IMR-90 (cell line): ENCODE measurements at regions of chr17 and their contacts with region 1.

Region 1: GRCh38 chr17:74987418-74987908 is at the start of gene CDR2L:
- DNase-seq: peak; percentile 89
- ATAC-seq: peak; percentile 92
- H3K4me3 ChIP-seq: peak within 1 kb of the TSS; percentile 95
- H3K27ac ChIP-seq: peak within 1 kb of the TSS; percentile 92
- H3K4me1 ChIP-seq: peaks cover 12% of the 10 kb centered on the region
- H3K27me3 ChIP-seq: no peaks in the 10 kb centered on the region
- CTCF ChIP-seq: no peak
- POLR2A ChIP-seq: peak; percentile 81
- RAD21 ChIP-seq: no peak
- total RNA-seq, gene CDR2L: 5.6 and 5.7 TPM in 2 replicates

Region 2: GRCh38 chr17:74852237-74853047 is 135.0 kb before region 1 on chr17:
- CTCF ChIA-PET with region 1: no interaction called
- POLR2A ChIA-PET with region 1: no interaction called
- dilution Hi-C with region 1: no loop called
- in situ Hi-C with region 1: no loop called
- intact Hi-C with region 1: no loop called
- DNase-seq: no peak
- ATAC-seq: peak; percentile 41
- H3K4me3 ChIP-seq: no peak overlapping the region
- H3K27ac ChIP-seq: no peak overlapping the region
- H3K4me1 ChIP-seq: no peaks in the 10 kb centered on the region; the same call in 1 of the 2 replicates
- H3K27me3 ChIP-seq: peaks cover 60% of the 10 kb centered on the region
- CTCF ChIP-seq: no peak
- POLR2A ChIP-seq: no peak
- RAD21 ChIP-seq: no peak

Region 3: GRCh38 chr17:75012346-75013091 is 25.1 kb after region 1 on chr17 and contains the start of gene MRPL58:
- CTCF ChIA-PET with region 1: interaction called, 6 read pairs
- POLR2A ChIA-PET with region 1: interaction called, 8 read pairs
- dilution Hi-C with region 1: no loop called
- in situ Hi-C with region 1: no loop called
- intact Hi-C with region 1: loop called (anchors 2 kb)
- DNase-seq: peak; percentile 83
- ATAC-seq: peak; percentile 95
- H3K4me3 ChIP-seq: peak within 1 kb of the TSS; percentile 84
- H3K27ac ChIP-seq: peak within 1 kb of the TSS; percentile 86
- H3K4me1 ChIP-seq: peaks cover 6% of the 10 kb centered on the region
- H3K27me3 ChIP-seq: no peaks in the 10 kb centered on the region
- CTCF ChIP-seq: peak; percentile 58
- POLR2A ChIP-seq: peak; percentile 81
- RAD21 ChIP-seq: peak; percentile 45
- total RNA-seq, gene MRPL58: 42.5 and 53.9 TPM in 2 replicates